ENCODE measurements at regions of chr14 and their contacts with region 1.

Region 1: DNA sequence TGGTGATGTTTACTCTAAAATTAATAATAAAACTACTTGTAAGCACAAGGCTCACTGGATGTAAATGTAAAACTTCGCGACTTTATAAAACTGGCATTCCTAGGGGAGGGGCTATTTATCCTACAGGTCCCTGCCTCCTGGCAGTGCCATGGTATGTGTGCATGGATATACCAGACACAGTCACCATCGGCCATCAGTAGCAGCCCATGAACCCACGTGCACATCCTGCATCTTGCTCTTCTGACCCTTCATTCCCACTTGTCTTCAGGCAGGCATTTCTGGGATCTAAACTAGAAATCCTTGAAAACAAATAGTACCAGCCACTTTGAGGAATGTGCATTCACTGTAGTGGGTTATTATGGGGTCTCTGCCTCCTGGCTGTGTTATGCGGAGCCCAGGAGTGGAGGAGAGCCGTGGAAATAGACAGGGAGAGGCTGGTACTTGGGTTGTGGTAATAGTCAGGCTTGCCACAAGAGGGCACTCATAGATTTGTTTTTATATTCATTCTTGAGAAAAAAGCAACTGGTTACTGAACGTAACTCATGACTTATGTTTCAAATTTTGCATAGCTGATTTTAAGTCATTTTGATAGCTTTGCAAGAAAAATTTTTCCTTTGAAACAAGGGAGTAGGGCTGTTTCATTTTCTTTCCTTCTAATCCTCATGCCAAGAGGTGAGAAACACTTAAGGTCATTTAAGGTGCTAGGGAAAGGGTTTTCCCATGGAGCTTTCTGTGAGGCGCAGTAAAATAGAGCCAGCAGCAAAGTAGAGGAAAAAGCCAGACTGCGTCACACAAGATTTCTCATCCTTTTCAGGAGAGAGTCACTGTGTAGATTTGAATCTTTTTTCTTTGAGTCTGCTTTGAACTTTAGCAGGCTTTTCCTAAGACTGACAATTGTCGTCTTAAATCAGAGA is 17.4 kb upstream of the GALNT16 start:
- DNase-seq: peak; percentile 61 to 75
- H3K4me3 ChIP-seq: no peak overlapping the region
- H3K27ac ChIP-seq: peak overlapping the region in 1 of 2 donors; percentile 30
- H3K4me1 ChIP-seq: peaks cover 0 to 4% (median 0%) of the 10 kb centered on the region in 4 donors
- H3K27me3 ChIP-seq: no peaks in the 10 kb centered on the region
- CTCF ChIP-seq: peak; percentile 72 to 89

Region 2: GRCh38 chr14:69363055-69363454 is 120.5 kb after region 1 on chr14:
- intact Hi-C with region 1: loop called (anchors 5 kb)
- DNase-seq: peak in 1 of 2 donors; percentile 41
- H3K4me3 ChIP-seq: no peak overlapping the region
- H3K27ac ChIP-seq: no peak overlapping the region
- H3K4me1 ChIP-seq: peaks cover 0 to 2% (median 0%) of the 10 kb centered on the region in 4 donors
- H3K27me3 ChIP-seq: peaks cover 0 to 7% of the 10 kb centered on the region in 2 donors
- CTCF ChIP-seq: peak; percentile 61

Region 3: DNA sequence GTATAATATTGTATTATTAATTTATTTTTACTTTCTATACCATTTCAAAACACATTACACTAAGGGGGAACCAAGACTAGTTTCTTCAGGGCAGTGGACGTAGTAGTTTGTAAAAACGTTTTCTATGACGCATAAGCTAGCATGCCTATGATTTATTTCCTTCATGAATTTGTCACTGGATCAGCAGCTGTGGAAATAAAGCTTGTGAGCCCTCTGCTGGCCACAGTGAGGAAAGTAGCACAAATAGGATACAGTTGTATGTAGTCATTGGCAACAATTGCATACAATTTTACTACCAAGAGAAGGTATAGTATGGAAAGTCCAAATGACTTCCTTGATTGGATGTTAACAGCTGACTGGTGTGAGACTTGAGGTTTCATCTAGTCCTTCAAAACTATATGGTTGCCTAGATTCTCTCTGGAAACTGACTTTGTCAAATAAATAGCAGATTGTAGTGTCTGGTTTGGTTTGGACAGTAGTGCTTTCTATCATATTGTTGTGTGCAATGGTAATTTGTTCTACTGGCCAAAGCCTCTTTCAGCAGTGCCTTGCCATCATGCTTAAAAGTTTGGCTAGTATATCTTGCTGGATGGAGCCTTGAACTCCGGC is 217.6 kb after region 1 on chr14:
- intact Hi-C with region 1: loop called (anchors 2 kb)
- DNase-seq: peak; percentile 67 to 77
- H3K4me3 ChIP-seq: no peak overlapping the region
- H3K27ac ChIP-seq: no peak overlapping the region
- H3K4me1 ChIP-seq: no peaks in the 10 kb centered on the region
- H3K27me3 ChIP-seq: no peaks in the 10 kb centered on the region
- CTCF ChIP-seq: peak; percentile 72 to 89

Region 4: DNA sequence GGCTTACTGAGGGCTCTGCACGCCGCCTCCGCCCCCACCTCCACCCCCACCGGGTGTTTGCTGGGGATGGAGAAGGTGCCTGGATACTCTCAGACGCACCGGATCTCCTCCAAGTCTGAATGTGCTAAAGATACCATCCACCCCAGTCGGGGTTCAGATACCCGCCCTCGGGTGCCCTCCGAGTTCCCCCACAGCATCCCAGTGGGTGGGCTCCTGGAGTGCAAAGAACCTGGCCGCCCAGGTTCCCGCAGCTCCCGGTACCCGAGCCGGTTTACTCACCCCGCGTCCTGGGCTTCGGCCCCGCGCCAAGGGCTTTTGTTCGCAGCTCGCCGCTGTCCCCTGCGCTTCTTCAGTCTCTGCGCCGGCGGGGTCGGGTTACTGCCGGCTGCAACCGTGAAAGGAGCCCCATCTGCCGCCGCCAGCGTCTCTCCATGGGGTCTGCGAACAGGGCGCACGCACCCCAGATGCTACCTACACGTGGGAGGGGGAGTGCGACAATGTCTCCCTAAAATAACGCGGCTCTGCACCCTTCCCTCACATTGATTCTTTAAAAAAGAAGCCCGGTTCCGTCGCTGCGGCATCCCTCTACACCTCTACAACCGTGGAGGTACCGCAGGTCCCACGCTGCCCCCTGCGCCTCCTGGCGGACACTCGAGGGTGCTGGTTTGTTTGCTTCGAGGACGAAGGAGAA is 331.8 kb after region 1 on chr14 and contains the start of gene CCDC177:
- intact Hi-C with region 1: loop called (anchors 10 kb)
- DNase-seq: no peak
- H3K4me3 ChIP-seq: peak within 1 kb of the TSS in 1 of 2 donors; percentile 39
- H3K27ac ChIP-seq: no peak within 1 kb of the TSS
- H3K4me1 ChIP-seq: peaks cover 0 to 40% (median 34%) of the 10 kb centered on the region in 4 donors
- H3K27me3 ChIP-seq: peaks cover 4 to 83% of the 10 kb centered on the region in 2 donors
- CTCF ChIP-seq: peak; percentile 53 to 78

Measured in tibial artery (tissue), 4 donors.